Activated CD4-positive, alpha-beta memory T cell treated with anti-CD3 and anti-CD28 coated beads, Interleukin-2, amount 10 ng/mL, durations not matched to agents 7 days and 5 days (primary cell): ENCODE measurements at regions of chr2 and their contacts with region 1.

Region 1: DNA sequence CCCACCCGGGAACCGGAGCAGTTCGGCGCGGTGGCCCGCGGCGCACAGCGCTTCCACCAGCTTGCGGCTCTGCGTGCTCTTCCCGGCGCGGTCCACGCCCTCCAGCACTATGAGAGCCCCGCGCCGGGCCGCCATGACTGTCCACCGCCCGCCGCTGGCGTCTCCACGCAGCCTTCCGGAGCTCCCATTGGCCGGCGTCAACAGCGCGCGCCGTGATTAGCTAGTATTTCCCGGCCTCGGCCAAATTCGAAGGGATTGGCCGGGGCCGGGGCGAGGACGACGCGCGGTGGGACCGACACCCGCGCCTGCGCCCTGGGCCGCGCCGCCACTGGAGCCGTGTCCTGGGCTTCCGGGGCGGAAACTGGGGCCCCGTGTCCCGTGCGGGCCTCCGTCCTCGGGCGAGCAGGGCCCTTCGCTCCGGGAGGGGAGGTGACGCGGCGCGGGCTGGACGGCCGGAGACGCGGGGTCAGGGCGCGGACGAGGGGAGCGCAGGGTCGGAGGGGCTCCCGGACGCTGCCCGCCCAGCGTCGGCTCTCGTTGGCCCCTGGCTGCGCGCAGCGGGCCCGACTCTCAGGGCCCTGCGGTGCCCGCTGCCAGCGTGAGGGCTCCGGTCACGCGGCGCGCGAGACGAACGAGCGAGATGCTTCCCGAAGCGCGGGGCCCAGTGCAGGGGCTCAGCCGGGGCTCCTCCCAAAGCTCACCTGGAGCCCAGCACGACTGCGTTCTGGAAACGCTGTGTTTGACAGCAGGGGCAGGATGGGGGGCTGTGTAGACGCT is at the start of gene DTYMK:
- DNase-seq: peak; percentile 97
- H3K4me3 Mint-ChIP-seq: peak within 1 kb of the TSS; percentile 82
- H3K27ac Mint-ChIP-seq: peak within 1 kb of the TSS; percentile 90
- H3K4me1 Mint-ChIP-seq: peaks cover 40% of the 10 kb centered on the region
- H3K27me3 Mint-ChIP-seq: no peaks in the 10 kb centered on the region
- total RNA-seq, gene DTYMK: 54.8 to 57.7 TPM

Region 2: DNA sequence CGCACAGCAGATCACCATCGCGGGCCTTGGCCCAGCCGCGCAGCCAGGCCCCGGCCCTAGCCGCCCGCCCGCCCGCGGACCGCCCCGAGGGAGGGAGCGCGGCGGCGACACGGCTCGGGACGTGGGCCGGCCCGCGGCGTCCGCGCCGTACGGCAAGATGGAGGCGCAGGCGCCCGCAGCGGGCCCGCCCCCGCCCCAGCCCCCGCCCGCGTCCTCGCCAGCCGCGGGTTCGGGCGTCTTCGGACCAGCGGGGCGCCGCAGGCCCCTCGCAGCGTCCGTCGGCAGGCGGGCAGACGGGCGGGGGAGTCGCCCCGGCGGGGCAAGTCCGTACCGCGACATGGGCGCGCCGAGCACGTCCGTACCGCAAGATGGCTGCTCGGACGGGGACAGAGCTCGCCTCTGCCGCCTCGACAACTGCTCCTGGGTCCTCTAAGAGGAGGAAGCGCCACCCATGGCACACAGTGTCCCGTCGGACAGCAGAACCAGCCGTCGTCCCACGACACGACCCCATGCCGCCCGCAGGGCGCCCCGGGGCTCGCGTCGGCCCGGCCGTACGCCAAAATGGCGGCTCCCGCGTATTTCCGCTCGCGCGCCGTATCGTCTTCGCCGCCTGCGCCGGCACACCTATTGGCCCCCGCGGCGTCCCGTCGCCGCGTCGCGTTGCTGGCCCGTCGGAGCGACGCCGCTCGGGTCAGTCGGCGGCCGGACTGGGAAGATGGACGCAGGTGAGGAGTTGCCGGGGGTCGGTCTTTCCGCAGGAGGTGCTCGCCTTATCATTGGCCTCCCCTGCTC is 49.6 kb before region 1 on chr2 and contains the starts of genes ATG4B and THAP4:
- CTCF ChIA-PET with region 1: interaction called, 9 read pairs
- POLR2A ChIA-PET with region 1: interaction called, 10 read pairs
- DNase-seq: peak; percentile 81
- H3K4me3 Mint-ChIP-seq: peak within 1 kb of the TSS; percentile 89
- H3K27ac Mint-ChIP-seq: peak within 1 kb of the TSS; percentile 85
- H3K4me1 Mint-ChIP-seq: peaks cover 48% of the 10 kb centered on the region
- H3K27me3 Mint-ChIP-seq: no peaks in the 10 kb centered on the region
- total RNA-seq, gene ATG4B: 84.1 to 87.1 TPM
- total RNA-seq, gene THAP4: 31.9 to 34.3 TPM

Region 3: GRCh38 chr2:241734467-241735208 is 47.8 kb after region 1 on chr2 and contains the start of gene D2HGDH:
- CTCF ChIA-PET with region 1: interaction called, 14 read pairs
- POLR2A ChIA-PET with region 1: interaction called, 9 read pairs
- DNase-seq: peak; percentile 95
- H3K4me3 Mint-ChIP-seq: peak within 1 kb of the TSS; percentile 80
- H3K27ac Mint-ChIP-seq: peak within 1 kb of the TSS; percentile 68
- H3K4me1 Mint-ChIP-seq: peaks cover 61% of the 10 kb centered on the region
- H3K27me3 Mint-ChIP-seq: peaks cover 1% of the 10 kb centered on the region
- total RNA-seq, gene D2HGDH: 24.6 to 25.0 TPM

Region 4: GRCh38 chr2:241748468-241749256 is 61.8 kb after region 1 on chr2:
- CTCF ChIA-PET with region 1: no interaction called
- POLR2A ChIA-PET with region 1: no interaction called
- DNase-seq: no peak
- H3K4me3 Mint-ChIP-seq: no peak overlapping the region
- H3K27ac Mint-ChIP-seq: no peak overlapping the region
- H3K4me1 Mint-ChIP-seq: no peaks in the 10 kb centered on the region
- H3K27me3 Mint-ChIP-seq: no peaks in the 10 kb centered on the region

Region 5: DNA sequence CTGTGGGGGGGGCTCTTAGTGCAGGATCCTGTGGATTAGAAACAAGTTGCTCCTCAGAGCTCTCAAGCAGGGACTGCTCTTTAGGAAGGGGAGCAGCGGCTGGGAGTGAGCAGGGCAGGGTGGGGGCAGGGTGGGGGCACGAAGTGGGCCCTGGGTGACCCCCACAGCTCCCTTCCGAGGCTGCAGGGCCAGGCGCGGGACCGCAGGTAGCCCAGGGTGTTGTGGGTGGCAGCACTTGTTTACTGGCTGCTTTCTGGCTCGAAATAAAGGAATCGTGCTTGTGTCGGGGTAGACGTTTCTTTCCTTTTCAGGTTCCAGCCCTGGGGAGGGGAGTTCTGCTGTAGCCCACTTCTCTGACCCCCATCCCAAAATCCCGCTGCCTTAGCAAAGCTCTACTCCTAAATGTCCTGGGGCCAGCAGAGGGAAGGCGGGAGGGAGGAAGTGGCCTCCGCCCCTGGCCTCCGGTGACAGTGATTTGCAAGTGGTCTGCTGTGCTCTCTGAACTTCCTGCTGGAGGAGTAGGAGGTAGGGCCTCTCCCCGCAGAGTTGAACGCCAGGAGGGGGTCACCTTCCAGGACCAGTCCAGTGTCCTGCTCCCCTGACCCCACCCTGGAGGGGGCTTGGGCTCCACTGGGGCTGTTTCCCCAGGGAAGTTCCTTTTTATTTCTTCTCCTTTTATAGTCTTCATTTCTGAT is 130.4 kb after region 1 on chr2:
- CTCF ChIA-PET with region 1: no interaction called
- POLR2A ChIA-PET with region 1: no interaction called
- DNase-seq: peak; percentile 17
- H3K4me3 Mint-ChIP-seq: peak overlapping the region; percentile 13
- H3K27ac Mint-ChIP-seq: no peak overlapping the region
- H3K4me1 Mint-ChIP-seq: peaks cover 12% of the 10 kb centered on the region
- H3K27me3 Mint-ChIP-seq: no peaks in the 10 kb centered on the region

Region 6: GRCh38 chr2:241867776-241868420 is 181.1 kb after region 1 on chr2:
- CTCF ChIA-PET with region 1: interaction called, 3 read pairs
- POLR2A ChIA-PET with region 1: interaction called, 11 read pairs
- DNase-seq: peak; percentile 48
- H3K4me3 Mint-ChIP-seq: no peak overlapping the region
- H3K27ac Mint-ChIP-seq: no peak overlapping the region
- H3K4me1 Mint-ChIP-seq: peaks cover 64% of the 10 kb centered on the region
- H3K27me3 Mint-ChIP-seq: peaks cover 25% of the 10 kb centered on the region

Region 7: DNA sequence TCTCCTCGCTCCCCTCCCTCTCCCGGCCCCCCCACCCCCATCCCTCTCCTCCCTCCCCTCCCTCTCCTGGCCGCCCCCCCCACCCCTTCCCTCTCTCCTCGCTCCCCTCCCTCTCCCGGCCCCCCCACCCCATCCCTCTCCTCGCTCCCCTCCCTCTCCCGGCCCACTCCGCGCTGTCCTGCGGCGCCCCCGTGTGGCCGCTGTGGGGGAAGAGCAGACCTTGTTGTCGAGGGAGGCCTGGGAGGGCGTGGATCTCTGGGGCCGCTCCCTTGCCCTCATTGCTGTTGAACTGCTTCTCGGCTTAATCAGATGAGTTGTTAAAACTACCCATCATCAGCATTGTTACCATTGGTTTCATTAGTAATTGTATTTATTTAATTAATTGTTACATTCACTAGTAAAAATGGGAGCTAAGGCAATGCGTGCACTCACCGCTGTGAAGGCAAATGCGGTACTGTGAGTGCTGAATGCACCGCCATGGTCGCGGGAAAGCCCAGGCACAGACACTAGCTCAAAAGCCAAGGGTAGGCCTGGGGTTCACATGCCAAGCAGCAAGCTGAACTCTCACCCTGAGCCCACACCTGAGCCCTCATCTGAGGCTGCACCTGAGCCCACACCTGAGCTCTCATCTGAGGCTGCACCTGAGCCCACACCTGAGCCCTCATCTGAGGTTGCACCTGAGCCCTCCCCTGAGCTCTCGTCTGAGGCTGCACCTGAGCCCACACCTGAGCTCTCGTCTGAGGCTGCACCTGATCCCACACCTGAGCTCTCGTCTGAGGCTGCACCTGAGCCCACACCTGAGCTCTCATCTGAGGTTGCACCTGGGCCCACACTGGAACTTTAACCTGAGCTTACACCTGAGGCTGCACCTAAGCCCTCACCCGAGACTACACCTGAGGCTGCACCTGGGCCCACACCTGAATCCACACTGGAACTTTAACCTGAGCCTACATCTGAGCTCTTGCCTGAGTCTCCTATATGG is 191.4 kb after region 1 on chr2:
- CTCF ChIA-PET with region 1: interaction called, 29 read pairs
- POLR2A ChIA-PET with region 1: interaction called, 16 read pairs
- DNase-seq: peak; percentile 82
- H3K4me3 Mint-ChIP-seq: no peak overlapping the region
- H3K27ac Mint-ChIP-seq: no peak overlapping the region
- H3K4me1 Mint-ChIP-seq: peaks cover 37% of the 10 kb centered on the region
- H3K27me3 Mint-ChIP-seq: no peaks in the 10 kb centered on the region